Heart left ventricle (tissue), 16 donors: ENCODE measurements at regions of chr5 and their contacts with region 1.

Region 1: DNA sequence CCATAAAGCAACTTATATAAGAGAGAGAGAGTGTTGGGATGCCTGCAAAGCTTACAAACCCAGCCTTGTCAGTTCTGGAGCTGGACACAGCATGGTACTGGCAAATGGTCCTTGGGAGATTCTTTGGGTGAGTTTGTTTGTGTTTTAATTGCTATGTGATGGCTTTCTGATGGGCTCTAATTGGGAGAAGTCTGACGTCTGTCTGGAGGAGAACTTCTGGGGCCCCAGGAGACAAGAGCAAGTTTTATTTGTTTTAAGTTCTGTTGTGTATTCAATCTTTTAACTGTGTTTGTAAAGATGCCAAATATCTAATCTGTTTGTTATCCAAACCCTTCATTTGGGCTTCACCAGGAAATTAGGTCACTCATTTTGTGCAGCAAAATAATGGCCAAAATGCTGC is 50.3 kb upstream of the AFAP1L1 start:
- DNase-seq: no peak
- ATAC-seq: no peak
- H3K4me3 ChIP-seq: no peak overlapping the region
- H3K27ac ChIP-seq: peak overlapping the region; percentile 3 to 73 (median 48)
- H3K4me1 ChIP-seq: peaks cover 3 to 76% (median 50%) of the 10 kb centered on the region in 12 donors
- H3K27me3 ChIP-seq: no peaks in the 10 kb centered on the region
- CTCF ChIP-seq: no peak
- POLR2A ChIP-seq: no peak

Region 2: GRCh38 chr5:149181732-149182131 is 39.6 kb before region 1 on chr5:
- intact Hi-C with region 1: loop called in 1 of 10 experiments (anchors 5 kb)
- DNase-seq: no peak
- ATAC-seq: no peak
- H3K4me3 ChIP-seq: no peak overlapping the region
- H3K27ac ChIP-seq: no peak overlapping the region
- H3K4me1 ChIP-seq: peaks cover 7 to 73% (median 29%) of the 10 kb centered on the region in 12 donors
- H3K27me3 ChIP-seq: no peaks in the 10 kb centered on the region
- CTCF ChIP-seq: no peak
- POLR2A ChIP-seq: no peak

Region 3: DNA sequence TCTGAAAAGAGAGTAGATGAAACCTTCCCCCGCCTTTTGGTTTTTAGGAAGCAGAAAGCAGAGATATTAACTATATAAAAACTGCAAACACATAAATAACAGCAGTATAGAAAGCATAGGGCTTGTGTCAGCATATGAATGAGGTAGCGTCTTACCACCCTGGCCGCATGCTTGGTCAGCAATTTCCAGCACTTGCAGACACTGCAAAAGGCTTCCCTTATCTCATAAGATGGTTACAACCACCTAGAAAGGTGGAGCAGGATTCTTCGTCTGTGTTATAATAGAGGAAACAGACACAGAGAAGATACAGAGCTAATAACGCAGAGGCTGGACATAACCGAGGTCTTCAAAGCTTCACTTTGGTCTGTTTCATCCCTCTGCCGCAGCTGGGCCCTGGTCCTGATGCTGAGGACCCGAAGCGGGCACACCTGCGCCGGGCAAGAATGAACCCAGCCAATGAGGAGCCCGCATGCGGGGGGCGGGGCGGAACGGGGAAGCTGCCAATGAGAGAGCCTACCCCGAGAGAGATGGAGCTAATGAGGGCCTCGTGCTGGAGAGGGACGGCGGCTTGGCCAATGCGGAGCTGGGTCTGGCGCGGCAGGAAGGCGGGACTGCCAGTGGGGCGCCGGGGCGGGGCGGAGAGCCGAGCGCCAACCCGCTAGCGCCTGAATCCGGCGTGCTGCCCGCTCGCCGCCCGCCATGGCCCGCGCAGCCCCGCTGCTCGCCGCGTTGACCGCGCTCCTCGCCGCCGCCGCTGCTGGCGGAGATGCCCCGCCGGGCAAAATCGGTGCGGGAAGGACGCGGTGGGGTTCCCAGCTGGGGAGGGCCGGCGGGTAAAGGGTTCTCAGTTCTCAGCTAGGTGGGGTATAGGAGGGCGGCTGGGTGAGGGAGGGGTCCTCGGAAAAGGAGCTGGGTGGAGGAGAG is 136.3 kb after region 1 on chr5 and contains the start of gene PCYOX1L:
- intact Hi-C with region 1: no loop called
- DNase-seq: peak; percentile 97 to 98 (median 97)
- ATAC-seq: peak; percentile 98 to 100 (median 100)
- H3K4me3 ChIP-seq: peak within 1 kb of the TSS; percentile 54 to 97 (median 77)
- H3K27ac ChIP-seq: peak within 1 kb of the TSS in 11 of 12 donors; percentile 31 to 84 (median 65)
- H3K4me1 ChIP-seq: peaks cover 0 to 30% (median 11%) of the 10 kb centered on the region in 12 donors
- H3K27me3 ChIP-seq: no peaks in the 10 kb centered on the region
- CTCF ChIP-seq: peak in 1 of 12 donors; percentile 7
- POLR2A ChIP-seq: peak in 1 of 2 donors; percentile 50
- total RNA-seq, gene PCYOX1L: 2.3 to 6.8 (median 3.7) TPM

Region 4: DNA sequence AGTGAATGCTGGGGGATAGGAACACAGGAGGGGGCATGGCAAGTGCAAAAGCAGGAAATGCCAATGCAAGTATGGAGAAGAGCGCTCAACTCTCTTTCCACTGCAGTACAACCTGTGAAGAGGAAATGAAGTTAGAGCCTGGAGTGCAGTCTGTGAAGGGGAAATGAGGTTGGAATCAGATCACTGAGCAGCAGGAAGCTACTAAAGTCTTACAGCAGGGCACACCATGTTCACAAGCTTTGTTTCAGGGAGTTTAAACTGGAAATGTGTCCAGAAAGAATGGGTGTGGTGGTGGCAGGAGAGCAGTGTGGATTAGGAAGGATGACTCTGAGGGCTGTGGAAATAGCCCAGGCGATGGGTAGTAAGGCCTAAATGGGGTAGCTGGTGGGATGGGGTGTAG is 375.4 kb after region 1 on chr5:
- intact Hi-C with region 1: no loop called
- DNase-seq: no peak
- ATAC-seq: peak; percentile 59 to 84 (median 75)
- H3K4me3 ChIP-seq: no peak overlapping the region
- H3K27ac ChIP-seq: peak overlapping the region; percentile 15 to 88 (median 54)
- H3K4me1 ChIP-seq: peaks cover 0 to 52% (median 13%) of the 10 kb centered on the region in 12 donors
- H3K27me3 ChIP-seq: no peaks in the 10 kb centered on the region
- CTCF ChIP-seq: no peak
- POLR2A ChIP-seq: no peak